Transverse colon (tissue), 4 donors: ENCODE measurements at regions of chr7 and their contacts with region 1.

Region 1: GRCh38 chr7:129271500-129272355 is 46.9 kb downstream of the AHCYL2 start:
- DNase-seq: peak; percentile 55
- H3K4me3 ChIP-seq: no peak overlapping the region
- H3K27ac ChIP-seq: no peak overlapping the region
- H3K4me1 ChIP-seq: no peaks in the 10 kb centered on the region
- H3K27me3 ChIP-seq: no peaks in the 10 kb centered on the region
- CTCF ChIP-seq: peak; percentile 64 to 70 (median 64)
- EP300 ChIP-seq: no peak
- POLR2A ChIP-seq: no peak

Region 2: GRCh38 chr7:129218514-129219062 is 53.1 kb before region 1 on chr7:
- in situ Hi-C with region 1: loop called in 1 of 4 experiments (anchors 10 kb)
- intact Hi-C with region 1: loop called (anchors 5 kb)
- DNase-seq: peak; percentile 87
- H3K4me3 ChIP-seq: no peak overlapping the region
- H3K27ac ChIP-seq: no peak overlapping the region
- H3K4me1 ChIP-seq: peaks cover 0 to 3% (median 0%) of the 10 kb centered on the region in 4 donors
- H3K27me3 ChIP-seq: no peaks in the 10 kb centered on the region
- CTCF ChIP-seq: peak; percentile 88 to 94 (median 90)
- EP300 ChIP-seq: no peak
- POLR2A ChIP-seq: no peak

Region 3: DNA sequence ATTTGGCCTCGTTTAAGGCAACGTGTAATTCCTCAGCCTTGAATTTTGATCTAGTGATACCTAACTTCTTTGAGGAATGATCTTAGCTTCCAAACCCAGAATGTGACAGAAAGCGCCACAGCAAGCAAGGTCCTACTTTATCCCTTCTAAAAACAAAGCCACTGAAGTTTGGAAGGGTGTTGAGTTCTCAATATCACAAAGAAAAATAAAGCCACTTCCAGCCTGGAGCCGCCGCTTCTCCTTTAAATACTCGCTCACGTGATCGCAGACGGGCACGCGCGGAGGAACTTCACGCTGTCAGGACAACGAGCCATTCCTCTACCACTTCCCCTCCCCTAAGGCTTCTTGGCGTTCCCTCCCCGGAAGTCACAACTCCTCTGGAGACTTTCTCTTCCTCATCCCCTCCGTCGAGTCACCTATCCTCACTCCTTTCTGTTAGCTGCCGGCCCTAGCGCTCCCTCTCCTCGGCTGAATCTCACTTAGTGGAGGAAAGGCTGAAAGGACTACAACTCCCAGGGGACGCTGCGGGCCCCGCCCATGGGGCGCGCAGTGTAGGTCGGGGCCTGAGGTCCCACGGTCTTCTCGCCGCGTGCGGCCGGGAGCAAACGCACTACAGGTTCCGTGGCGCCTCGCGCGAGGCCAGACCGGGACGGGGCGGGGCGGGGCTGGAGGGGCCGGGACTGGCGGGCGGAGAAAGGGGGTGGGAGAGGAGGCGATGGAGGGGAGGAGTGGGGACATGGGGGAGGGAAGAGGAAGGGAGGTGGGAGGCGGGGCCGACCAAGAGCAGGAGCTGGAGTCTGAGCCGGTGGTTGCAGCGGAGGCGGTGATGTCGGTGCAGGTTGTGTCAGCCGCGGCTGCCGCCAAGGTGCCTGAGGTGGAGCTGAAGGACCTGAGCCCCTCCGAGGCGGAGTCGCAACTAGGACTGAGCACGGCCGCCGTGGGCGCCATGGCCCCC is 47.2 kb before region 1 on chr7 and contains the start of gene AHCYL2:
- in situ Hi-C with region 1: loop called in 1 of 4 experiments (anchors 10 kb)
- intact Hi-C with region 1: loop called (anchors 5 kb)
- DNase-seq: peak; percentile 99
- H3K4me3 ChIP-seq: peak within 1 kb of the TSS; percentile 55 to 96 (median 85)
- H3K27ac ChIP-seq: peak within 1 kb of the TSS; percentile 92 to 95 (median 95)
- H3K4me1 ChIP-seq: peaks cover 11 to 37% (median 17%) of the 10 kb centered on the region in 4 donors
- H3K27me3 ChIP-seq: no peaks in the 10 kb centered on the region
- CTCF ChIP-seq: no peak
- EP300 ChIP-seq: no peak
- POLR2A ChIP-seq: peak; percentile 50
- total RNA-seq, gene AHCYL2: 93.7 to 635 (median 551) TPM